ENCODE measurements at regions of chr5 and their contacts with region 1.

Region 1: DNA sequence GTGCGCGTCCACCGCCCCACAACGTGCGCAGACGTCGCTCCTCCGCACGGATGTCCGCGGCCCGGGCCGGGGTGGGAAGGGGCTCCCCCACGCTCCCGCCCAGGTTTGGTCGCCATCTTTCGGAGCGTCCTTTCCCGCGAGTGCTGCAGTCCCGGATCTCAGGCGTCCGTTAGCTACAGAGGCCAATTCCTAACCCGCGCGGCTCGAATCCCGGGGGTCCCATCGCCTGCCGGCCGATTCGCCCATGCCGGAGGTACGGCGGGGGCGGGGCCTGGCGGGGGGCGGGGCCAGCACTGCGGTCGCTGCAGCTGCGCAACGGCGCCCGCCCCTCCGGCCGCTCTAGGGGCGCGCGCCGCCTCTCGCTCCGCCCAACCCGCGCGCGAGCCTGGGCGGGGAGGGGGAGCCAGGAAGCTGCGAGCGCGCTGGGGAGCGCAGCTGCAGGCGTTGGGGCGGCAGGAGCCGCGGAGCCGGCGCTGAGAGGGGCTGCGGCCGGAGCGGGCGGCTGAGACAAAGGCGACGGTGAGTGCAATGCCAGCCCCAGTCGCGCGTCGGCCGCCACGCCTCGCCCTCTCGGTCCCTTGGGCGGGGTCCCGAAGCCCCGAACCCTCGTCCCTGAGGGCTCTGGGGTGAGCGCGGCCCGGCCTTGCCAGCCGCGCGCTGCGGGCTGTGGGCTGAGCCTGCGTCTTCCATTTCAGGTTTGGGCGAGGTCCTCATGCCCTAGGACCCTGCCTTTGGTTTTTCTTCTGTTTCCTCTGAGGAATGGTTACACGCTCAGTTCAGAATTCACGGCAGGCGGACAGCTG is at the start of gene CDC42SE2:
- DNase-seq: peak; percentile 74 to 78
- ATAC-seq: peak; percentile 83 to 86
- H3K4me3 ChIP-seq: peak within 1 kb of the TSS; percentile 95 to 100 (median 98)
- H3K27ac ChIP-seq: peak within 1 kb of the TSS; percentile 87 to 96 (median 94)
- H3K4me1 ChIP-seq: peaks cover 33 to 44% of the 10 kb centered on the region in 2 donors
- H3K27me3 ChIP-seq: no peaks in the 10 kb centered on the region
- CTCF ChIP-seq: peak in 1 of 5 experiments; percentile 11
- POLR2A ChIP-seq: peak; percentile 92 to 97
- total RNA-seq, gene CDC42SE2: 23.9 to 29.6 (median 26.4) TPM

Region 2: GRCh38 chr5:131129306-131129705 is 134.5 kb before region 1 on chr5:
- in situ Hi-C with region 1: no loop called
- intact Hi-C with region 1: no loop called
- DNase-seq: no peak
- ATAC-seq: no peak
- H3K4me3 ChIP-seq: no peak overlapping the region
- H3K27ac ChIP-seq: no peak overlapping the region
- H3K4me1 ChIP-seq: no peaks in the 10 kb centered on the region
- H3K27me3 ChIP-seq: no peaks in the 10 kb centered on the region
- CTCF ChIP-seq: no peak
- POLR2A ChIP-seq: no peak

Region 3: GRCh38 chr5:131170540-131171275 is 93.1 kb before region 1 on chr5 and contains the start of gene LYRM7:
- in situ Hi-C with region 1: loop called in 3 of 4 experiments (anchors 5 to 10 kb)
- intact Hi-C with region 1: loop called (anchors 1 kb)
- DNase-seq: peak; percentile 97 to 98
- ATAC-seq: peak; percentile 99
- H3K4me3 ChIP-seq: peak within 1 kb of the TSS; percentile 59 to 83 (median 74)
- H3K27ac ChIP-seq: peak within 1 kb of the TSS; percentile 80 to 90 (median 84)
- H3K4me1 ChIP-seq: peaks cover 19 to 20% of the 10 kb centered on the region in 2 donors
- H3K27me3 ChIP-seq: no peaks in the 10 kb centered on the region
- CTCF ChIP-seq: no peak
- POLR2A ChIP-seq: peak; percentile 55 to 80
- total RNA-seq, gene LYRM7: 9.8 to 38.8 (median 14.7) TPM

Region 4: DNA sequence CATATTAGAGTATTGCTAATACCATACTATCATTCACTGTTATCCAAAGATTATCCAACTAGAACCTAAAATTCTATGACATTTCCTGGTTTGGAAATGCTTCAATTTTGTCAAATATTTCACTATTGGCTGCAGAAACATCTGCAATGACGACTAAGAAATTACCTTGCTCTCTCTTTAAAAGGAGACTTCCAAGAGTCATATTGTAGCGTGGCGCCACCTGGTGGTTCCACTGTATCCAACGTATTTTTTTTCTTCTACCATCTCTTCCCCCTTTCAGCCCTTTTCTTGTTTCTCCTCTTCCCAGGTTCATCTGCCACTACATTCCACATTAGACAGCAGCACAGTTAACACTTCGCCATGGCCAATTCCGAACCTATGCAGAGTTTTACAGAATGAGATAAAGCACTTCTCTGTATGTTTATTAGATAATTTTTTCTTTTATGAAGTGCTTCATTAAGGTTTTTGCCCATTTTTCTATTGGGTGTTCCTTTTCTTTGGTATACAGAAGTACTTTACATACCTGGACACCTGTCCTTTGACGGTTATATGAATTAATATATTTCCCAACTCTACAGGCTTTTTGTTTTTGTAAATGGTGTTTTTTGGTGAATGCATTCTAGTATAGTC is 153.5 kb after region 1 on chr5:
- in situ Hi-C with region 1: no loop called
- intact Hi-C with region 1: loop called (anchors 10 kb)
- DNase-seq: peak; percentile 37 to 58
- ATAC-seq: peak in 1 of 2 donors; percentile 71
- H3K4me3 ChIP-seq: no peak overlapping the region
- H3K27ac ChIP-seq: no peak overlapping the region
- H3K4me1 ChIP-seq: no peaks in the 10 kb centered on the region
- H3K27me3 ChIP-seq: no peaks in the 10 kb centered on the region
- CTCF ChIP-seq: peak; percentile 58 to 84 (median 65)
- POLR2A ChIP-seq: no peak

Measured in gastrocnemius medialis (tissue), 4 donors.